Mammary epithelial cell (primary cell): ENCODE measurements at regions of chr14 and their contacts with region 1.

Region 1: DNA sequence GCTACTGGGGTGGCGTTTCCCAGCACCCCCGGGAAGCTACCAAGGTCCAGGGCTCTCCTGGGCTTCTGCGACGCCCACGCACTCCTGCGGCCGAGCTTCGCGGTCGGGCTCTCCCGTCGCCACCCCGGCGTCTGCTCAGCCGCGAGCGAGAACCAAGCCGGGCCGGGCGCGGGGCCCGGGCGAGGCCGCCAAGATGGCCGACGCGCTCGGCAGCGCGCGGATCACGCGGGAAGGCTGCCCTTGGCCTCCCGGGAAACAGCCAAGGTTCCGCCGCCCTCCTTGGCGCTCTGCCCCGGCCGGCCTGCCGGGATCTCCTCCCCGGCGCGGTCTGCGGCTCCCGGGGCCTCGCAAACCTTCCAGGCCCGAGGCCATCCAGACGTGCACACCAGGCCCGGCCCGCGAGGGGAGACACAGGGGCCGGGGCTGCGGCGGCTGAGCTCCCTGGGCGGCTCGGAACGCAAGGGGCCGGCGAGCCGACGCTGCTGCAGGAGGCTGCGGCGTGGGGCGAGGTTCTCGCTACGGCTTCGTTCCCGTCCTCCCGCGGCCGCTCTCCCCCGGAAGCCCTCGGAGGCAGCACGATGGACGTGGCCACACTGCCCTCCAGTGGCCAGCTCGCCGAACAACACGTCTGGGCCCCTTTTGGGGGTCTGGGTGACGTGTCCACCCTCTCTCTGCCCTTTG is 23.5 kb upstream of the ZFP36L1 start:
- DNase-seq: peak; percentile 82
- H3K4me3 ChIP-seq: peak overlapping the region; percentile 31 to 54 (median 45)
- H3K27ac ChIP-seq: peak overlapping the region; percentile 80
- H3K4me1 ChIP-seq: peaks cover 29% of the 10 kb centered on the region
- H3K27me3 ChIP-seq: no peaks in the 10 kb centered on the region
- CTCF ChIP-seq: peak; percentile 78 to 91

Region 2: DNA sequence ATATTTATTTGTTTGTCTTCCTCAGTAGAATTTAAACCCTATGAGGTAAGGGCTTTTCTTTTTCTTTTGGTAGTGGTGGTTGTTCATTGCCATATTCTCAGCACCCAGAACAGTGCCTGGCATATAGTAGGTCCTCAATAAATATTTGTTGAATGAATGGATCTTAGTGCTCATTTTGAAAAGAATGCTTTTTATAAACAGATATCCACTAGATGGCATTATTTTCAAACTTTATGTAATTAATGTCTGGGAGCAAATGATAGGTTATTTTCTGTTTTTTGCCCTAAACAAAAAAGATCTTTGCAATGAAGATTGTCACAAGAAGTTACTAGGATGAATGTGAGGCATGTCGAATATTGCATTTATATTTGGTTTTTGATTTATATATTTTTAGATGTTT is 932.7 kb before region 1 on chr14:
- CTCF ChIA-PET with region 1: no interaction called
- dilution Hi-C with region 1: no loop called
- in situ Hi-C with region 1: no loop called
- intact Hi-C with region 1: loop called (anchors 5 kb)
- DNase-seq: no peak
- H3K4me3 ChIP-seq: no peak overlapping the region
- H3K27ac ChIP-seq: no peak overlapping the region
- H3K4me1 ChIP-seq: no peaks in the 10 kb centered on the region
- H3K27me3 ChIP-seq: no peaks in the 10 kb centered on the region
- CTCF ChIP-seq: peak; percentile 18 to 27

Region 3: DNA sequence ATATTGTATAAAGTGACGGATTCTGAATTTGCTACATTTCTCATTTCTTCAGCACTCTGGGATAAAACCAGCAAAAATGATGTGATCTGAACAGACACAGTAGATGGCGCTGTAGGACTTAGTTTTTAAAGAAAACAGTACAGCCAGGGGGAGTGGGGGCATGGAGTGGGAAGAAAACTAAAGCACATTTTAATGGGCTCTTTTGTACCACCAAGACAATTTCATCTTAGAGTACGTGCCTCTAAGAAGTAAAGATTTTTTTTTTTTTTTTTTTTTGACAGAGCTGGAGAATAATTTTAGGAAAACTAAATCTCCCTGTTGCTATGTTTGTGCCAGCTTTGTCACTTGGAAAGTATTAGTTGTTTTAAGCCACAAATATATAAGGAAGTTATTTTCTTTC is 872.5 kb before region 1 on chr14:
- CTCF ChIA-PET with region 1: no interaction called
- dilution Hi-C with region 1: loop called (anchors 25 kb)
- in situ Hi-C with region 1: loop called in 1 of 2 experiments (anchors 10 kb)
- intact Hi-C with region 1: loop called (anchors 1 kb)
- DNase-seq: peak; percentile 61
- H3K4me3 ChIP-seq: no peak overlapping the region
- H3K27ac ChIP-seq: no peak overlapping the region
- H3K4me1 ChIP-seq: peaks cover 17% of the 10 kb centered on the region
- H3K27me3 ChIP-seq: no peaks in the 10 kb centered on the region
- CTCF ChIP-seq: peak; percentile 63 to 76

Region 4: DNA sequence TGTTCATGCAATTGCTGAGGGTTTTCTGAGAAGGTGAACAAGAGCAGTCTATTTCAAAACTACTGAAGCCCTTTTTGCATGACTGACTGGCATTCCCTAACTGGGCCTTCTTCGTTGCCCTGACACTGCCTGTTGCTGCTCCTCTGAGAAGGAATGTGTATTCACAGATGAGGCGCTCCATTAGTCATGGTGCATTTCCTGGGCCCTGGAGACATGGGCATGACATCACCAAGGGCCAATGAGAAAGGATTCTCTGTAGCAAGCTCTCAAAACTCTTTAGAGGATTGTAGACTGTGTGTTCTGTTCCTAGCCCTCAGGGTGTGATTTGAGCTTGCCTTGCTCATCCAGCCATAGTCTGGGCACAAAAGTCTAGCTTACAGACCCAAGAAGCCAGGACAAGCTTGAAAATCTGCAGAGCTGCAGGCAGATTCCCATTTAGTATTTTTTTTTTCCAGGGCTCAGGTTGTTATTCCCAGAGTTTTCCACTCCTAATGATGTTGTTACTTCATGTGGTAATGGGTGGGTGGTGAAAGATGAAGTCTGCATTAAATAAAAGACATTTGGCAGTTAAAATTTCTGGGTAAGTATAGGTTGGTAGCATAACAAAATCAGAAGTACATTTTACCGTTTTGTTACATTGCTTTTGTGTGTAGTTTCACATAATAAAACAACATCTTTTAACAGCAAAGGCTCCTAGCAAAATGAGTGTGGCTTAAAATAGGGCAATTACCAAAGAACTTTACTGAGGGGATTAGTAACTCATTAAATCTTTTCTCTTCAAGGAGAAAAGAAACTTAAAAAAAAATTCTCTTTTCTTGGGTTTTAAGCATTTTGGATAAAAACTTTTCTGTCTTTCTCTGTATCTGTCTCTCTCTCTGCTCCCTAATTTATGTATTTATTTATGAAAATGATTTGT is 678.4 kb before region 1 on chr14:
- CTCF ChIA-PET with region 1: no interaction called
- dilution Hi-C with region 1: no loop called
- in situ Hi-C with region 1: no loop called
- intact Hi-C with region 1: loop called (anchors 5 kb)
- DNase-seq: peak; percentile 99
- H3K4me3 ChIP-seq: no peak overlapping the region
- H3K27ac ChIP-seq: peak overlapping the region; percentile 99
- H3K4me1 ChIP-seq: peaks cover 63% of the 10 kb centered on the region
- H3K27me3 ChIP-seq: no peaks in the 10 kb centered on the region
- CTCF ChIP-seq: no peak

Region 5: GRCh38 chr14:68795597-68796417 is 20.6 kb before region 1 on chr14:
- CTCF ChIA-PET with region 1: interaction called, 12 read pairs
- dilution Hi-C with region 1: no loop called
- in situ Hi-C with region 1: no loop called
- intact Hi-C with region 1: loop called (anchors 1 kb)
- DNase-seq: peak; percentile 85
- H3K4me3 ChIP-seq: peak overlapping the region; percentile 63 to 72 (median 72)
- H3K27ac ChIP-seq: peak overlapping the region; percentile 98
- H3K4me1 ChIP-seq: peaks cover 15% of the 10 kb centered on the region
- H3K27me3 ChIP-seq: no peaks in the 10 kb centered on the region
- CTCF ChIP-seq: peak; percentile 52 to 78